ENCODE measurements at regions of chr2 and their contacts with region 1.

Region 1: GRCh38 chr2:201414099-201415023 is 36.9 kb downstream of the TRAK2 start:
- DNase-seq: peak in 2 of 9 experiments; percentile 24 to 55
- ATAC-seq: peak; percentile 70
- H3K4me3 ChIP-seq: peak overlapping the region; percentile 13 to 25
- H3K4me3 Mint-ChIP-seq: no peak overlapping the region
- H3K27ac ChIP-seq: peak overlapping the region in 1 of 2 experiments; percentile 60
- H3K27ac Mint-ChIP-seq: no peak overlapping the region
- H3K4me1 ChIP-seq: peaks cover 36% of the 10 kb centered on the region
- H3K4me1 Mint-ChIP-seq: peaks cover 34% of the 10 kb centered on the region
- H3K27me3 ChIP-seq: no peaks in the 10 kb centered on the region
- H3K27me3 Mint-ChIP-seq: no peaks in the 10 kb centered on the region
- CTCF ChIP-seq: no peak

Region 2: GRCh38 chr2:201401815-201402214 is 12.5 kb before region 1 on chr2:
- CTCF ChIA-PET with region 1: no interaction called
- POLR2A ChIA-PET with region 1: no interaction called
- intact Hi-C with region 1: loop called in 1 of 2 experiments (anchors 2 kb)
- DNase-seq: no peak
- ATAC-seq: no peak
- H3K4me3 ChIP-seq: no peak overlapping the region
- H3K4me3 Mint-ChIP-seq: no peak overlapping the region
- H3K27ac ChIP-seq: no peak overlapping the region
- H3K27ac Mint-ChIP-seq: no peak overlapping the region
- H3K4me1 ChIP-seq: peaks cover 14% of the 10 kb centered on the region
- H3K4me1 Mint-ChIP-seq: peaks cover 40% of the 10 kb centered on the region
- H3K27me3 ChIP-seq: no peaks in the 10 kb centered on the region
- H3K27me3 Mint-ChIP-seq: no peaks in the 10 kb centered on the region
- CTCF ChIP-seq: no peak

Measured in CD8-positive, alpha-beta T cell (primary cell).